ENCODE measurements at regions of chr9 and their contacts with region 1.

Region 1: GRCh38 chr9:131762356-131762932 is 22.6 kb upstream of the RAPGEF1 start:
- DNase-seq: peak; percentile 41
- ATAC-seq: peak; percentile 97
- H3K4me3 ChIP-seq: peak overlapping the region in 1 of 3 experiments; percentile 14; a peak in 1 of 6 replicates
- H3K27ac ChIP-seq: no peak overlapping the region
- H3K4me1 ChIP-seq: 0 out of 2 replicates have a peak, but pooled peaks cover 5% of the 10 kb centered on the region
- H3K27me3 ChIP-seq: peaks cover 2 to 52% of the 10 kb centered on the region in 2 experiments; a peak in 4 of 5 replicates
- CTCF ChIP-seq: peak; percentile 97
- EP300 ChIP-seq: no peak
- POLR2A ChIP-seq: no peak
- RAD21 ChIP-seq: peak; percentile 98

Region 2: DNA sequence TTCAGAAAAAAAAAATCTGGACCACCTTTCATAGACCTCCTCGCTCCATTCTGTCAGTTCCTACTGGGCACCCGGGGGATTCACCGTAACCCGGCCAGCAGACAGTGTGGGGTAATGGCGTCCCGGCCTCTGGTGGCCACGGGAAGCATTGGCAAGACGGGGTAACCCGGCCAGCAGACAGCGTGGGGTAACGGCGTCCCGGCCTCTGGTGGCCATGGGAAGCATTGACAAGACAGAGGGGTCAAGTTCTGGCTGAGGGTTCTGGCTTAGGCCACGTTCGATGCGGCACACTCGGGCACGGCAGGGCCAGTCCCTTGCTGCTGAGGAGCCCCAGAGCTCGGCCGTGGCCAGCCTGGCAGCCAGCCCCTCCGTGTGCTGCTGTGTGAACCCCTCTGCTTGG is 93.7 kb after region 1 on chr9:
- CTCF ChIA-PET with region 1: interaction called, 8 read pairs
- POLR2A ChIA-PET with region 1: no interaction called
- in situ Hi-C with region 1: no loop called
- intact Hi-C with region 1: loop called (anchors 2 kb)
- DNase-seq: peak; percentile 48
- ATAC-seq: peak; percentile 100
- H3K4me3 ChIP-seq: no peak overlapping the region
- H3K27ac ChIP-seq: no peak overlapping the region
- H3K4me1 ChIP-seq: no peaks in the 10 kb centered on the region
- H3K27me3 ChIP-seq: no peaks in the 10 kb centered on the region; a peak in 1 of 5 replicates
- CTCF ChIP-seq: peak; percentile 51
- EP300 ChIP-seq: no peak
- POLR2A ChIP-seq: no peak
- RAD21 ChIP-seq: peak; percentile 80

Region 3: GRCh38 chr9:132240753-132241493 is 478.5 kb after region 1 on chr9:
- CTCF ChIA-PET with region 1: interaction called, 5 read pairs
- POLR2A ChIA-PET with region 1: no interaction called
- in situ Hi-C with region 1: no loop called
- intact Hi-C with region 1: loop called (anchors 5 kb)
- DNase-seq: peak; percentile 77
- ATAC-seq: peak; percentile 76
- H3K4me3 ChIP-seq: peak overlapping the region; percentile 65 to 73 (median 66); a peak in 4 of 6 replicates
- H3K27ac ChIP-seq: no peak overlapping the region
- H3K4me1 ChIP-seq: peaks cover 16% of the 10 kb centered on the region
- H3K27me3 ChIP-seq: peaks cover 16 to 70% of the 10 kb centered on the region in 2 experiments; a peak in 4 of 5 replicates
- CTCF ChIP-seq: 0 out of 2 replicates have a peak, but pooled peaks have one; percentile 1
- EP300 ChIP-seq: no peak
- POLR2A ChIP-seq: no peak
- RAD21 ChIP-seq: no peak

Region 4: GRCh38 chr9:132249123-132249522 is 486.7 kb after region 1 on chr9:
- CTCF ChIA-PET with region 1: interaction called, 12 read pairs
- POLR2A ChIA-PET with region 1: no interaction called
- in situ Hi-C with region 1: no loop called
- intact Hi-C with region 1: loop called (anchors 5 kb)
- DNase-seq: no peak
- ATAC-seq: no peak
- H3K4me3 ChIP-seq: no peak overlapping the region
- H3K27ac ChIP-seq: no peak overlapping the region
- H3K4me1 ChIP-seq: no peaks in the 10 kb centered on the region
- H3K27me3 ChIP-seq: peaks cover 2 to 26% of the 10 kb centered on the region in 2 experiments; a peak in 4 of 5 replicates
- CTCF ChIP-seq: no peak
- EP300 ChIP-seq: no peak
- POLR2A ChIP-seq: no peak
- RAD21 ChIP-seq: no peak

Region 5: DNA sequence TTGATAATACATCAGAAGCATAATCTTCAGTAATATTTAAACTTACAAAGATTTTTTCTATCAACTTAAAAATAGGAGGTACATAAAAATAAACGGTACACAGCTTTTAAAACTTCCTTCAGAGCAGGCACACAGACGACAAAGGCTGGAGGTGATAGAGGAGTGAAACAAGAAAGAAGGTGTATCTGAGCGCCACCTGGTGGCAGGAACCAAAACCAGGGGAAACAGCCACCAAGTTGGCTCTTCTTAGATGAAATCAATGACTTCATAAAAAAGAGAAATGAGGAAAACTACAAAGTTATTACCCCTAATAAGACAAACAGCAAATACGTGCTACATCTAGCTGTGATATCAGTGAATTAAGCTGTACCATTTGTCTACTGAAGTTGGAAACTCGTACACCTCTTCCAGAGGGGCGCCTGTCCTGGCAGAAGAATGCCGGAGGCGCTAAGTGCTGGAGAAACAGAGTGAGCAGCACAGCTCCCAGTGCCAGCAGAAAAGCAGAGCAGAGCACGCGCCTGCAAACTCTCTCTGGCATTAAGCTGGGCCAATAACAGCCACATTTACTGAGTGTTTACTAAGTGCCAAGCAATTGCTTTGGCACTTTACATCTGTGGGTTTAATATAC is 506.4 kb after region 1 on chr9:
- CTCF ChIA-PET with region 1: interaction called, 6 read pairs
- POLR2A ChIA-PET with region 1: no interaction called
- in situ Hi-C with region 1: loop called (anchors 5 kb)
- intact Hi-C with region 1: no loop called
- DNase-seq: peak; percentile 39
- ATAC-seq: peak; percentile 73
- H3K4me3 ChIP-seq: no peak overlapping the region
- H3K27ac ChIP-seq: peak overlapping the region; percentile 27
- H3K4me1 ChIP-seq: peaks cover 11% of the 10 kb centered on the region; the same call in 1 of the 2 replicates
- H3K27me3 ChIP-seq: no peaks in the 10 kb centered on the region
- CTCF ChIP-seq: peak; percentile 76
- EP300 ChIP-seq: no peak
- POLR2A ChIP-seq: no peak
- RAD21 ChIP-seq: no peak

Measured in HepG2 (cell line).